K562 (cell line): ENCODE measurements at regions of chr4 and their contacts with region 1.

Region 1: DNA sequence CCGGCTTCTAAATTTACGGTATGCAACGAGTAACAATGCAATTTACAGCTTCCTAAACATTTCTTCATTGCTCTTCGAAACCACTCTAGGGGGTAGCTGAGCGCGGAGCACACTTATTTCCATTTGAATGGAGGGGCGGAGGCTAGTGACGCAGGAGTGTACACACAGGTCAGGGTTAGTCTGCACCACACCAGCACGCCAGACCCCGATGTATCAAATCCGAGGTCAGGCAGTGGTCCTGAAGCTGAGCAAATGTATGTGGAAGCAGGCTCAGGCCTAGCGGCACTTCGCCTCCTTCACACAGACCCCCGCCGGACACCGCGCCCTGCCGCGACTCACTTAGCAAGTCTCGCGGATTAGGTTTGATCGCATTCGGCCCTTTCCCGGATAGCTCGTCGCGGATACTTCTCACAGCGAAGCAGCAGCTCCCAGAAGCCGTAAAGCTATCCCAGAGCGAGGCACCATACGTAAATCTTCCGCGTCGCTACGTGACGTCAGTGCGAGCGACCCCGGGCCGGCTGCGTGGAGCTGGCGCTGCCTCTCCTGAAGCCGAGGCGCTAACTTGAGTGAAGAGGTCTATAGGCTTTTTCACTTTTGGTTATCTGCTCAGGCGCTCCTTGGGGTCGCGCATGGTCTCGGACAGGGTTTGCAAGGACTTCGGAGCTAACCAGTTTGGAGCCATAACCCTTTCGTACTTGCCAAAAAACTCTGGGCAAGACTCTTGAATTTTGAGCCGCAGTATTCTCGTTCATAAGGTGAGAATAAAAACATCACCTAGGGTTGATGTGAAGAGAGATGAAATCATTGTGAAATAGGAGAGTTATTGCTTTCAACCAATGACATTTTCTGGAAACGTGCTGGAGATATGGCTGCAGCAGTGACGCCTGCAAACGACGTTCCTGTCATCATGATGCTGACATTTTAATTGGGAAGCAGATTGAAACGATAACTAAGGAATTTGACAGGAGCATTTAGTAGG is at the start of gene AASDH:
- DNase-seq: peak; percentile 86 to 96 (median 89)
- ATAC-seq: peak; percentile 88
- H3K4me3 ChIP-seq: peak within 1 kb of the TSS; percentile 61
- H3K27ac ChIP-seq: peak within 1 kb of the TSS; percentile 89
- H3K4me1 ChIP-seq: peaks cover 3 to 17% of the 10 kb centered on the region in 2 experiments; a peak in 2 of 5 replicates
- H3K27me3 ChIP-seq: no peaks in the 10 kb centered on the region
- CTCF ChIP-seq: peak in 2 of 3 experiments; percentile 4 to 10; a peak in 1 of 6 replicates
- EP300 ChIP-seq: peak; percentile 51
- POLR2A ChIP-seq: peak; percentile 98
- RAD21 ChIP-seq: no peak
- polyA plus RNA-seq, gene AASDH: 16.8 to 29.7 TPM

Region 2: GRCh38 chr4:56301181-56302076 is 85.9 kb before region 1 on chr4:
- CTCF ChIA-PET with region 1: no interaction called
- POLR2A ChIA-PET with region 1: no interaction called
- in situ Hi-C with region 1: no loop called
- intact Hi-C with region 1: no loop called
- DNase-seq: peak; percentile 64 to 81 (median 66)
- ATAC-seq: peak; percentile 99
- H3K4me3 ChIP-seq: no peak overlapping the region
- H3K27ac ChIP-seq: no peak overlapping the region
- H3K4me1 ChIP-seq: no peaks in the 10 kb centered on the region; a peak in 1 of 5 replicates
- H3K27me3 ChIP-seq: peaks cover 20 to 43% of the 10 kb centered on the region in 2 experiments; a peak in 4 of 5 replicates
- CTCF ChIP-seq: peak; percentile 85 to 90 (median 89)
- EP300 ChIP-seq: no peak
- POLR2A ChIP-seq: no peak
- RAD21 ChIP-seq: peak; percentile 88 to 91

Region 3: DNA sequence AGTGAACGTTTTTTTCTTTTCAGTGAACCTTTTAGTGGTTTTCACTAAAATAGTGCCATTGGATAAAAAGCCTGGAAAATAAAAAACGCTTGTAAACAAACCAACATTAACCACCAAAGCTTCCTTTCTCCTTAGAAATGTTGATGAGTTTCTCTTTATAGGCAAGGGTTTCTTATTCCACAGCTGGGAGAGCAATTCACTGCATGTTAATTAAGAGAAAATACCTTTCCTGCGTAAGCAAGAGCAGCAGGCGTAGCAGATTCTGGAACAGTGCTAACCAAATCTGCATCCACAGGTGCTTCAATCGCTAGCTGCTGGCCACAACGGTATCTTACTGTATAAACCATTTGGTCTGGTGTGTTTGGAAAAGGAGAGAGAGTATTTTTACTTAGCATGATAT is 13.2 kb after region 1 on chr4:
- CTCF ChIA-PET with region 1: no interaction called
- POLR2A ChIA-PET with region 1: interaction called, 10 read pairs
- in situ Hi-C with region 1: no loop called
- intact Hi-C with region 1: no loop called
- DNase-seq: no peak
- ATAC-seq: no peak
- H3K4me3 ChIP-seq: no peak overlapping the region
- H3K27ac ChIP-seq: no peak overlapping the region
- H3K4me1 ChIP-seq: no peaks in the 10 kb centered on the region
- H3K27me3 ChIP-seq: no peaks in the 10 kb centered on the region
- CTCF ChIP-seq: no peak
- EP300 ChIP-seq: no peak
- POLR2A ChIP-seq: no peak
- RAD21 ChIP-seq: no peak

Region 4: DNA sequence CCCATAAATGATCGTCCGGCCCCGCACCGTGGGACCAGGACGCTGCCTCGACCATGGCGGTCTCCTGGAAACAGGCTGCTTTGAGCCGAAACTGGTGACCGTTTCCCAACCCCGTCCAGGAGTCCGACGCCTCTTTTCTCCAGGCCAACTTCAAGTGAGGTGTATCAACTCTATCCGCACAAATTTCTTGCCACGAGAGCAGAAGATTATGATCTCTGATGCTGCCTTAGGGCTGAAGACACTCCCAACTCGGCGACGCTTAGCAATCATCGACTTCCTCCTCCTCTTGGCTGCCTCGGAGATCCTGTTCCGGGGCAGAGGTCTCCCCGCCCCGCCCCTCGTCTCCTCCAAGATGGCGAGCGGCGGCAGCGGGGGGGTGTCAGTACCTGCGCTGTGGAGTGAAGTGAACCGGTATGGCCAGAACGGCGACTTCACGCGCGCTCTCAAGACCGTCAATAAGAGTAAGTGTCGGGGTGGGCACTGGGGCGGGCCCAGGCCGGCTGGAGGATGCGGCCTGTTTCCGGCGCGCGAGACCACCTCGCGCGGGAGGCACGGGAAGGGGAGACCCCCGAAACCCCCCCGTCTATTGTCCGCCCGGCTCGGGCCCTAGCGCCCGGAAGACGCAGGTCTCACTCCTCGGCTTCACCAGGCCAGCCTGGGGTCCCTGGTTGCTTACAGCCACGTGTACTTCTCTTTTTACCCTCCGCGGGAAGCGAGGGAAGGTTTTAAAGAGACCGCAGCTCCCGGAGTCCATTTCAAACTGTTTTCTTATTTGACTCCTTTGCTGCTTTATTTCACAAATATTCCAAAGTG is 80.2 kb after region 1 on chr4 and contains the start of gene SRP72:
- CTCF ChIA-PET with region 1: no interaction called
- POLR2A ChIA-PET with region 1: interaction called, 10 read pairs
- in situ Hi-C with region 1: no loop called
- intact Hi-C with region 1: loop called (anchors 5 kb)
- DNase-seq: peak; percentile 87 to 96 (median 90)
- ATAC-seq: peak; percentile 89
- H3K4me3 ChIP-seq: peak within 1 kb of the TSS; percentile 95
- H3K27ac ChIP-seq: peak within 1 kb of the TSS; percentile 99
- H3K4me1 ChIP-seq: peaks cover 0 to 15% of the 10 kb centered on the region in 2 experiments; a peak in 3 of 5 replicates
- H3K27me3 ChIP-seq: no peaks in the 10 kb centered on the region
- CTCF ChIP-seq: no peak
- EP300 ChIP-seq: peak; percentile 66
- POLR2A ChIP-seq: peak; percentile 96
- RAD21 ChIP-seq: no peak
- polyA plus RNA-seq, gene SRP72: 300 to 341 TPM